ENCODE measurements at regions of chr1 and their contacts with region 1.

Region 1: GRCh38 chr1:202599677-202600431 is 110.4 kb downstream of the SYT2 start:
- DNase-seq: peak; percentile 71
- H3K4me3 ChIP-seq: no peak overlapping the region
- H3K27ac ChIP-seq: peak overlapping the region; percentile 11
- H3K27me3 ChIP-seq: no peaks in the 10 kb centered on the region
- CTCF ChIP-seq: peak; percentile 90

Region 2: DNA sequence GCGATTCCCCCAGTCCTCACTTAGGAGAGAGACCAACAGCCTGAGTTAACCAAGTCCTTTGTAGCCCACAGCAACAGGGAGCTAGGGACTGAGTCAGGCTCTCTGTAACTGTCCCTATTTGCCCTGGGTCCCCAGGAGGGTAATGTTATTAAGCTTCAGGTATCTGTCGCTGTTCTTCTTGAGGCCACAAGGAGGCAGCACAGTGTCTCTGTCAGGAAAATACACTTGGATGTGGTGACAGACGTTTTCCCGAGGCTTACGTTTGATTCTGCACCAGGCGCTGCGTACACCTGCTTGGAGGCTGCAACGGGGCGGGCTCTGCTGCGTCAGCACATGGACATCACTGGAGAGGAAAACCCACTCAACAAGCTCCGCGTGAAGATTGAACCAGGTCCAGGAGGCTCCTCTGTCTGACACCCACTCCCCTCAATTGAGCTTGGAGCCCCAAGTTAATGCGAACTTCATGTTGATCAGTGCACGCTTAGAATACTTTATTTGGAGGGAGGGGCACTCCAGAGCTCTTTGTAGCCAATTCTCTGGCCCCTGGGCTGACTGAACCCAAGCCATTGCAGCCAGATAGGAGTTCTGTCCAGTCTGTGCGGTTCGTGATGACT is 600.1 kb before region 1 on chr1:
- CTCF ChIA-PET with region 1: no interaction called
- POLR2A ChIA-PET with region 1: no interaction called
- DNase-seq: no peak
- H3K4me3 ChIP-seq: no peak overlapping the region
- H3K27ac ChIP-seq: no peak overlapping the region
- H3K27me3 ChIP-seq: no peaks in the 10 kb centered on the region
- CTCF ChIP-seq: peak; percentile 77

Region 3: GRCh38 chr1:202501281-202501680 is 98.6 kb before region 1 on chr1:
- CTCF ChIA-PET with region 1: interaction called, 38 read pairs
- POLR2A ChIA-PET with region 1: interaction called, 3 read pairs
- DNase-seq: no peak
- H3K4me3 ChIP-seq: no peak overlapping the region
- H3K27ac ChIP-seq: no peak overlapping the region
- H3K27me3 ChIP-seq: no peaks in the 10 kb centered on the region
- CTCF ChIP-seq: peak; percentile 58

Region 4: GRCh38 chr1:202576816-202577215 is 23.0 kb before region 1 on chr1:
- CTCF ChIA-PET with region 1: interaction called, 29 read pairs
- POLR2A ChIA-PET with region 1: interaction called, 3 read pairs
- DNase-seq: peak; percentile 63
- H3K4me3 ChIP-seq: no peak overlapping the region
- H3K27ac ChIP-seq: peak overlapping the region; percentile 84
- H3K27me3 ChIP-seq: no peaks in the 10 kb centered on the region
- CTCF ChIP-seq: no peak

Measured in AG04450 (cell line).